ENCODE measurements at regions of chr16 and their contacts with region 1.

Region 1: DNA sequence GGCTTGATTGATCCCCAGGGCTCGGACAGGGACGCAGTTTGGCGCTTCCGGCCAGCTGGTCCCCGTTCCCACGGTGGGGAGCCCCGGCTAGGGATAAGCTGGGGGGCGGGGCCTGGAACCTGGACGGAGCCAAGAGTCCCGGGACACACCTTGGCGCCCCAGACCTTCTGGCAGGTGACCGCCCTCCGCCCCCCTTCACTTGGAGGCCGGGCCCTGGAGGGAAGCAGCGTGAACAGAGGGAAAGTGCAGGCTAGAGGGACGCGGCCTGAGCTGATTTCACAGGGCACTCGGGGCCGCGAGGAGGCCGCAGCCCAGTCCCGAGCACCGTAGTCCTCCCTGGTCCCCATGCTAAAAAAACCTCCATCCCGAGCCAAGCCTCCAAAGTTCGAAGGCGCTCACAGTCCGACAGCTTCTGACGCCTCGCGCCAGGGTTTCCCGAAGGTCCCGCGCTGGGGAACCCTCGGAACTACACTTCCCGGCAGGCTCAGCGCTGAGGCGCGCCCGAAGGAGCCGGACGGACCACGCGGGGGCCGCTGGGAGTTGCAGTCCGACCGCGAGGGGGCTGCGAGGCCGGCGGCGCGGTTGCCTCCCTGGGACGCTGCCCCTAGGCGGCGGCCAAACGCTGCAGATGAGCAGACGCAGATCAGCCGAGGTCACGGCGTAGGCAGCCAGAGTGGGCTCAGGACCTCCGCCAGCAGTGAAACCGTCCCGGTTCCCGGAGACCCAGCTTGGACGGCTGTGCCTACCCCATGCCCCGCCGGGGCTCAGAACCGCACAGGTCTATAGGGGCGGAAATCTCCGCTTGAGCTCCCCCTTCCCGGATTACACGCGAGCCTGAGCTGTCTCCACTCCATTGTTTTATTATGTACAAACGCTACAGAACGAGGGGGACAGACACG is at the start of gene TBX6:
- DNase-seq: peak; percentile 96
- H3K4me3 ChIP-seq: peak within 1 kb of the TSS; percentile 36 to 67 (median 43)
- H3K27ac ChIP-seq: peak within 1 kb of the TSS; percentile 78 to 92 (median 92)
- H3K4me1 ChIP-seq: peaks cover 25 to 49% (median 38%) of the 10 kb centered on the region in 4 donors
- H3K27me3 ChIP-seq: no peaks in the 10 kb centered on the region
- CTCF ChIP-seq: peak; percentile 71 to 98 (median 85)
- EP300 ChIP-seq: no peak
- POLR2A ChIP-seq: peak; percentile 54
- total RNA-seq, gene TBX6: 0.82 to 2.2 TPM in 2 of 4 donors, not detected in the others

Region 2: GRCh38 chr16:30407102-30407803 is 315.5 kb after region 1 on chr16 and contains the start of gene ZNF771:
- in situ Hi-C with region 1: loop called in 2 of 4 experiments (anchors 25 kb)
- intact Hi-C with region 1: no loop called
- DNase-seq: peak; percentile 96
- H3K4me3 ChIP-seq: peak within 1 kb of the TSS; percentile 45 to 75 (median 60)
- H3K27ac ChIP-seq: peak within 1 kb of the TSS; percentile 77 to 95 (median 90)
- H3K4me1 ChIP-seq: peaks cover 12 to 30% (median 23%) of the 10 kb centered on the region in 4 donors
- H3K27me3 ChIP-seq: no peaks in the 10 kb centered on the region
- CTCF ChIP-seq: peak in 2 of 5 experiments; percentile 24 to 31
- EP300 ChIP-seq: no peak
- POLR2A ChIP-seq: peak; percentile 66
- total RNA-seq, gene ZNF771: 7.4 to 28.1 (median 15.1) TPM

Region 3: DNA sequence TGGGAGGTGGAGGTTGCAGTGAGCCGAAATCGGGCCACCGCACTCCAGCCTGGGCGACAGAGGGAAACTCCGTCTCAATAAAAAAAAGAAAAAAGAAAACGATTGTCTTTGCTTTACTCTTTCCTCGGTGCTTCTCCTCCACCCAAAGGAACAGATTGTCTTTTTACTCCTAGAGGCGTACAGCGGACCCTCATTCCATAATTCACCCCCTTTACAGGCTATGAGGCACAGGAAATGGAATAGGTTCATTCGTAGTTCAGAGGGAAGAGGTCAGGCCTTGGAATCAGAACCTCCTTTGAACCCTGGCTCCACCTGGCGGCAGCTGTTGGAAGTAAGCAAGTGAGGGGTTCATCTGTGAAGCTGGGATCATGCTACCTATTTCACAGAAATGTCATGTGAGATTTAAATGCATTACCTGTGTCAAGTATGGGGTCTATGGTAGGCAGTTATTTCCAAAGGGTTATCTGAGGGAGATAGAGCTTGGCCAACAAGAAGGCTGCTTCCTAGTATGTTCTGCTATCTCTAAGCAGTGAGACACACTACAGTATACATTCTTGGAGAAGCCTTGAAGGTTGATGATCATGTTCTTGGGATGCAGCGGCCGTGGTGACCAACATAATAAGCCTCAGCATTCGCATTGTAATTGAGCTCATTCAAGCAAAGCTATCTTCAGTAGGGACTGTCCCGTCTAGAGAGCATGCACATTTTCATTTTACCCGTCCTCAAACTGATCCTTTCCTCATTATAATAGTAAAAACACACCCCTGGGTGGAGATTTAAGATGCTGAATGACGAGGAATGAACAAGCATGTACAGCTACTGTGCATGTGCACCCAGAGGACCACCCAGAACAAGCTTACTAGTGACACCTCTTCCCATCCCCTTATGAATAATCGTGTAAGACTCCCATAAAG is 537.2 kb after region 1 on chr16:
- in situ Hi-C with region 1: loop called in 1 of 4 experiments (anchors 25 kb)
- intact Hi-C with region 1: no loop called
- DNase-seq: peak; percentile 93
- H3K4me3 ChIP-seq: peak overlapping the region in 2 of 4 donors; percentile 14 to 24
- H3K27ac ChIP-seq: peak overlapping the region; percentile 44 to 68 (median 64)
- H3K4me1 ChIP-seq: peaks cover 0 to 10% (median 4%) of the 10 kb centered on the region in 4 donors
- H3K27me3 ChIP-seq: no peaks in the 10 kb centered on the region
- CTCF ChIP-seq: peak; percentile 87 to 96 (median 89)
- EP300 ChIP-seq: no peak
- POLR2A ChIP-seq: no peak

Measured in transverse colon (tissue), 4 donors.